Calu3 (cell line): ENCODE measurements at regions of chr7 and their contacts with region 1.

Region 1: DNA sequence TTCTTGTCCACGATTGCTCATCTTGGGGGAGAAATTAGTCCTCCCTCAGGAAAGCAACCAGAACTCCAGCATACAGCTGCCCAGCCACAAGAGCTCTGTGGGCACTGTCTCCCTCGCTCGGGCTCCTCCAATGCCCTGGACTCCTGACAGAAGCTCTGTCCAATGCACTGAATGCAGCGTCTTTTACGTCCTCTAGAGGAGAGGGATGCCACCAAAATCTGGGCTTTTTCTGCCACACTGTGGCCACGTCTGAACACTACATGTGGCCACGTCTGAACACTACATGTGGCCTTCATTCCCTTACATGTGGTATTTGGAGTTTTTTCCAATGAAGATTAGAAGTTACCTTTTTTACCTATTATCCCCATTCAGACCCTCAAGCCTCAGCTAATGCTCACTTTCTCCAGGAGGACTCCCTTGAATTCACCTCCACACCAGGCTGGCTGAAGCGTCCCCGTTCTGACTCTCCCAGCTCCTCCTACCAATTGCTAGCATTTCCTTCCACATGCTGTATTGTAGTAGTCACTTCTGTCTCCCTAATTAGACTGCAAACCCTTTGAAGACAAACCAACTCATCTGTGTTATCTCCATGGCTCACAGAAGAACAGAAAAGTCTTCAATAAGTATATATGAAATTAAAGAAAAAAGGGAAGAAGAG is 134.3 kb upstream of the PDE1C start:
- DNase-seq: peak; percentile 87
- H3K4me3 Mint-ChIP-seq: peak overlapping the region; percentile 43
- H3K27ac Mint-ChIP-seq: no peak overlapping the region
- H3K4me1 Mint-ChIP-seq: peaks cover 27% of the 10 kb centered on the region
- H3K27me3 Mint-ChIP-seq: peaks cover 30% of the 10 kb centered on the region
- CTCF ChIP-seq: peak; percentile 94

Region 2: DNA sequence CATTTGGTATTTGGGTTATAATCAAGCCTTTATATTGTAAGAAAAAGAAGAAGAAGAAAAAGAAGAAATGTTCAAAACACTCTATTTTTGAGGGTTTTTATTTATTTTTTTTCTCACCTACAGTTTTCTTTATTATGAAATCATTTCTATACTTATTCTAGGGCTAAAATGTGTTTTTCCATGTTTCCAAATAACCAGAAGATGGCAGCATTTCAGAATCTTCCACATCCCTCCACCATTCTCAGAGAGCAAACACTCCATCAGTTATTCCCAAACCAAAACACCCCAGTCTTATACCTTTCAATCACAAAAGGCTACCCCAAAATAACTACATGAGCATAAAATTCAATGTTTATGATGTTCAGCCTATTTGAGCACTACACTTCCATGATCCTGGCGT is 556.2 kb before region 1 on chr7:
- CTCF ChIA-PET with region 1: interaction called, 3 read pairs
- intact Hi-C with region 1: loop called (anchors 1 kb)
- DNase-seq: no peak
- H3K4me3 Mint-ChIP-seq: no peak overlapping the region
- H3K27ac Mint-ChIP-seq: no peak overlapping the region
- H3K4me1 Mint-ChIP-seq: no peaks in the 10 kb centered on the region
- H3K27me3 Mint-ChIP-seq: no peaks in the 10 kb centered on the region
- CTCF ChIP-seq: peak; percentile 10

Region 3: GRCh38 chr7:31782411-31782991 is 422.0 kb before region 1 on chr7:
- CTCF ChIA-PET with region 1: interaction called, 12 read pairs
- intact Hi-C with region 1: loop called (anchors 1 kb)
- DNase-seq: peak; percentile 57
- H3K4me3 Mint-ChIP-seq: no peak overlapping the region
- H3K27ac Mint-ChIP-seq: no peak overlapping the region
- H3K4me1 Mint-ChIP-seq: peaks cover 6% of the 10 kb centered on the region
- H3K27me3 Mint-ChIP-seq: no peaks in the 10 kb centered on the region
- CTCF ChIP-seq: peak; percentile 92

Region 4: DNA sequence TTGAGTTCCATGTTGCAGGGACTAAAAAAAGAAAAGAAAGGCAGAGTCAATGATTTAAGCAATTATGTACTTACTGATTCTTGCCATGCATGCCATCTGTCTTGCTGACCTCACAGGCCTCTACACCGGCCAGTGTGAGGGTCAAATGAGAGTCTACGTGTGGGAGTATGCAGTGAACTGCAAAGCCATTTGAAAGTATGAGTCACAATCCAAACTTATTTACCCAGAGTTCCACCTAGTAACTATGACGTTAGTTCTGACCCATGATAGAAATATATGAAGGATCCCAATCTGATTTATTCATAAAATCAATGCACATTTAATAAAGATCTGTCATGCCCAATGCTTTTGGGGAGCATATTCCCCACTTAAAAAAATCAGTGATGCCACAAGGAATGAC is 160.8 kb before region 1 on chr7:
- CTCF ChIA-PET with region 1: interaction called, 5 read pairs
- intact Hi-C with region 1: loop called (anchors 1 kb)
- DNase-seq: peak; percentile 47
- H3K4me3 Mint-ChIP-seq: no peak overlapping the region
- H3K27ac Mint-ChIP-seq: peak overlapping the region; percentile 37
- H3K4me1 Mint-ChIP-seq: peaks cover 65% of the 10 kb centered on the region
- H3K27me3 Mint-ChIP-seq: no peaks in the 10 kb centered on the region
- CTCF ChIP-seq: no peak

Region 5: DNA sequence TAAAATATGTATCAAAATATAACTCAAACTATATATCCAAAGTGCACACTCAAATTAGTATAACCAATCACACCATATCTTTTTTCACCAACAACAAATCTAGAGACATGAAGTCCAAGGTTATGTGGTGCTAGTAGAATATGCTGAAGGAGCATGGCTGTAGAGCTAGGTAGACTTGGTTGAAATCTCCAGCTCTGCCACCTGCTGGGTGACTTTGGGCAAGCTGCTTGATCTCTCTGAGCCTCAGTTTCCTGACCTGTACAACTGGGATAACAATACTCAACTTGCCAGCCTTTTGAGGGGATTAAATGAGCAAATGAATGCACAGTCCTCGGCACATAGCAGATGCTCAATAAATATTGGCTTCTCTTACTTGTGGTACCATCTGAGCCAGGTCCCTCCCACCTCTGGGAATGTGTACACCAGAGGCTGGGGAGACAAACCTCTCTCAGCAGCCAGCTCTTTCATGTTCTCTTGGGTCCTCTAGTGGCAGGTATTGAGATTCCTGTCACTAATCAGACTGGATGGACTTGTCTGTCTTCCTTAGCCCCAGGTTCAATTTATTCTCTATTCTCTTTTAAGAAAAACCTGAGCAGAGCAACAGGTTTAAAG is 40.0 kb before region 1 on chr7:
- CTCF ChIA-PET with region 1: interaction called, 17 read pairs
- intact Hi-C with region 1: loop called (anchors 1 kb)
- DNase-seq: peak; percentile 79
- H3K4me3 Mint-ChIP-seq: no peak overlapping the region
- H3K27ac Mint-ChIP-seq: peak overlapping the region; percentile 62
- H3K4me1 Mint-ChIP-seq: peaks cover 36% of the 10 kb centered on the region
- H3K27me3 Mint-ChIP-seq: no peaks in the 10 kb centered on the region
- CTCF ChIP-seq: peak; percentile 92

Region 6: GRCh38 chr7:32179567-32179966 is 24.9 kb before region 1 on chr7:
- CTCF ChIA-PET with region 1: no interaction called
- intact Hi-C with region 1: no loop called
- DNase-seq: no peak
- H3K4me3 Mint-ChIP-seq: no peak overlapping the region
- H3K27ac Mint-ChIP-seq: no peak overlapping the region
- H3K4me1 Mint-ChIP-seq: no peaks in the 10 kb centered on the region
- H3K27me3 Mint-ChIP-seq: peaks cover 8% of the 10 kb centered on the region
- CTCF ChIP-seq: no peak

Region 7: GRCh38 chr7:32259931-32260596 is 55.6 kb after region 1 on chr7:
- CTCF ChIA-PET with region 1: no interaction called
- intact Hi-C with region 1: no loop called
- DNase-seq: no peak
- H3K4me3 Mint-ChIP-seq: no peak overlapping the region
- H3K27ac Mint-ChIP-seq: no peak overlapping the region
- H3K4me1 Mint-ChIP-seq: peaks cover 6% of the 10 kb centered on the region
- H3K27me3 Mint-ChIP-seq: peaks cover 43% of the 10 kb centered on the region
- CTCF ChIP-seq: no peak

Region 8: GRCh38 chr7:32318300-32319011 is 114.0 kb after region 1 on chr7:
- CTCF ChIA-PET with region 1: no interaction called
- intact Hi-C with region 1: no loop called
- DNase-seq: no peak
- H3K4me3 Mint-ChIP-seq: peak overlapping the region; percentile 44
- H3K27ac Mint-ChIP-seq: no peak overlapping the region
- H3K4me1 Mint-ChIP-seq: no peaks in the 10 kb centered on the region
- H3K27me3 Mint-ChIP-seq: peaks cover 95% of the 10 kb centered on the region
- CTCF ChIP-seq: no peak

Region 9: DNA sequence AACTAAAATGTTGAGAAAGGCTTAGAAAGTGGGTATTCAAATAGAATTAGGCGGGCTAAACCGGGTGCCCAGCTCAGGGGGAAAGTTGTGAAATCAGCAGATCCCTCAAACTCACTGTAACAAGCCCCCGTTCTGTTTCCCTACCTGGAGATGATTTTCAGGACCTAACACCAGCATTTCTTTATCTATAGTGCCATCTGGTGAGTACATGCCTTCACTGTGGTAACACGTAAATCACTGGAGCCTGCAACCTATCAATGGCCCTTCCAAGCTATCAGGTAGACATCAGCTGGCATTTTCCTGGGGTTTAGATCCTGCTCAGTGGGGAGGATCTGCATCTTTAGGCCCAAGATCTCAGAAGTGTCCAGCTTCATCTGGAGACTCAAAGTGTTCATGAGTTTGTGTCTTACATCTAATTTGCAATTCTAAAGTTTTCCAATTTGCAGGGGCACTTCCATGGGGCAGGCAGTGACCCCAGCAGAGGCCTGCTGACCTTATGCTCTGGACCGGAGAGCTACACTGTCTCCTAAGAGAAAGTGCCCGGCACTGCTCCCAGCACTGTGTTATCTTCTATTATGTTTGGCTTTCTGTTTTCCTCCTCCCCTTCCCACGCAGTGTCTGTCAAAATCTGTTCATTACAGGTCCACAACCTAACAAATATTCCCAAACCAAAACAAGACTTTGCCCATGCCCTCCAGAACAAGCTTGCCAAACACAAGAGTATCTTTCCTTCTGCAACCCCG is 153.2 kb after region 1 on chr7:
- CTCF ChIA-PET with region 1: interaction called, 17 read pairs
- intact Hi-C with region 1: no loop called
- DNase-seq: no peak
- H3K4me3 Mint-ChIP-seq: no peak overlapping the region
- H3K27ac Mint-ChIP-seq: no peak overlapping the region
- H3K4me1 Mint-ChIP-seq: no peaks in the 10 kb centered on the region
- H3K27me3 Mint-ChIP-seq: peaks cover 94% of the 10 kb centered on the region
- CTCF ChIP-seq: peak; percentile 36

Region 10: GRCh38 chr7:32381024-32381601 is 176.6 kb after region 1 on chr7:
- CTCF ChIA-PET with region 1: no interaction called
- intact Hi-C with region 1: no loop called
- DNase-seq: no peak
- H3K4me3 Mint-ChIP-seq: no peak overlapping the region
- H3K27ac Mint-ChIP-seq: no peak overlapping the region
- H3K4me1 Mint-ChIP-seq: no peaks in the 10 kb centered on the region
- H3K27me3 Mint-ChIP-seq: peaks cover 99% of the 10 kb centered on the region
- CTCF ChIP-seq: no peak